Ovary (tissue), 10 donors: ENCODE measurements at regions of chr2 and their contacts with region 1.

Region 1: DNA sequence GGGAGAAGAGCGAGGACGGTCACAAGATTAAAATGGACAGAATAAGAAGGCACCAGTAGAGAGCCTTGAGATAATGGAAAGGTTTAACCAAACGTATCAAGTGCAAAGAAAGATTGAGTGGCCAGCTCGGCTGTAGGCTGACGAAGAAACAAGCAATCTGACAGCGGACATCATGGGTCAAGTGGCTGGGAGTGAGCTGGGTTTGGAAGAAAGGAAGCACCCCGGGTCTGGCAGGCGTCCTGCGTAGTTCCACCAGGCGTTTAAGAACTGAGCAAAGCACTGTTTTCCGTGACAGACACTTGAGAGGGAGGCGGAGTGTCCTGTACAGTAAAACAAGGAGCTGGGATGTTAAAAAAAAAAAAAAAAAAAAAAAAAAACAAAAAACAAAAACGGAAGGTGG is 27.1 kb downstream of the DAPL1 start:
- DNase-seq: no peak
- H3K4me3 ChIP-seq: no peak overlapping the region
- H3K27ac ChIP-seq: no peak overlapping the region
- H3K4me1 ChIP-seq: no peaks in the 10 kb centered on the region
- H3K27me3 ChIP-seq: no peaks in the 10 kb centered on the region
- CTCF ChIP-seq: no peak
- EP300 ChIP-seq: no peak
- POLR2A ChIP-seq: no peak

Region 2: GRCh38 chr2:158745044-158745865 is 76.9 kb before region 1 on chr2:
- intact Hi-C with region 1: no loop called
- DNase-seq: peak; percentile 54 to 70 (median 67)
- H3K4me3 ChIP-seq: no peak overlapping the region
- H3K27ac ChIP-seq: no peak overlapping the region
- H3K4me1 ChIP-seq: peaks cover 15% of the 10 kb centered on the region
- H3K27me3 ChIP-seq: no peaks in the 10 kb centered on the region
- CTCF ChIP-seq: peak in 1 of 3 donors; percentile 26
- EP300 ChIP-seq: no peak
- POLR2A ChIP-seq: no peak

Region 3: GRCh38 chr2:159030674-159031380 is 208.6 kb after region 1 on chr2:
- intact Hi-C with region 1: loop called in 1 of 4 experiments (anchors 5 kb)
- DNase-seq: peak; percentile 70 to 83 (median 79)
- H3K4me3 ChIP-seq: no peak overlapping the region
- H3K27ac ChIP-seq: no peak overlapping the region
- H3K4me1 ChIP-seq: peaks cover 28% of the 10 kb centered on the region
- H3K27me3 ChIP-seq: no peaks in the 10 kb centered on the region
- CTCF ChIP-seq: no peak
- EP300 ChIP-seq: no peak
- POLR2A ChIP-seq: no peak

Region 4: DNA sequence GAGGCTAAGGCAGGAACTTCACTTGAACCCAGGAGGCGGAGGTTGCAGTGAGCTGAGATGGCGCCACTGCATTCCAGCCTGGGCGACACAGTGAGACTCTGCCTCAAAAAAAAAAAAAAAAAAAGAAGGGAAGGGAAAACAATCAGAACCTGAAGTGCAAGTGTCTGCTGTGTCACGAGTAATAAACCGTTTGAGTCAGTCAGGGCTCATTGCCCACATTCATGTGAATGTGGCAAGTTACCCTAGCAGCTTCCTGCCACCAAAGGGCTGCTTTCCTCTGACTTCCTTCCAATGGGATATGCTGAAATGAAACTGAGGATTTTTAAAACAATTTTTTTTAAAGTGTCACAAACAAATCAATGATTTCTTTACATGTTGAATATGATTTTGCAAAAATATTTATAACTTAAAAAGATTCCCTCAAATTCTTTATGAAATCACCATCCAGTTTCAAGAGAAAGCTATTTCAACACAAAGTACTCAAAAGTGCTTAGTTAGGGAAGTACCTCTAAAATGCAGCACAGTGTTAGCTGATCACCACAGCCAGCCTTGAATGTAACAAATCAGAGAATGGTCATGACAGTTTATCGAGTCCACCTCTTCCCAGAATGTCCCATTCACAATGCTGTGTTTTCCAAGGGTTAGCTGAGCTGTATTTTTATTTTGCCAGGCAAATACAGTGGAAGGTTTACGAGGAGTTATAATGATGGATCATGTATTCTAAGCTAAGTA is 428.0 kb after region 1 on chr2:
- intact Hi-C with region 1: no loop called
- DNase-seq: peak in 1 of 5 donors; percentile 31
- H3K4me3 ChIP-seq: no peak overlapping the region
- H3K27ac ChIP-seq: no peak overlapping the region
- H3K4me1 ChIP-seq: peaks cover 1% of the 10 kb centered on the region
- H3K27me3 ChIP-seq: no peaks in the 10 kb centered on the region
- CTCF ChIP-seq: no peak
- EP300 ChIP-seq: no peak
- POLR2A ChIP-seq: no peak